Naive thymus-derived CD4-positive, alpha-beta T cell (primary cell): ENCODE measurements at regions of chr10 and their contacts with region 1.

Region 1: GRCh38 chr10:110252151-110252550 is 44.7 kb downstream of the MXI1 start:
- DNase-seq: no peak
- ATAC-seq: no peak
- H3K4me3 ChIP-seq: no peak overlapping the region
- H3K4me3 Mint-ChIP-seq: no peak overlapping the region
- H3K27ac ChIP-seq: no peak overlapping the region
- H3K27ac Mint-ChIP-seq: peak overlapping the region in 1 of 9 donors; percentile 23
- H3K4me1 ChIP-seq: peaks cover 0 to 6% of the 10 kb centered on the region in 2 donors
- H3K4me1 Mint-ChIP-seq: peaks cover 16 to 42% (median 28%) of the 10 kb centered on the region in 7 donors
- H3K27me3 ChIP-seq: no peaks in the 10 kb centered on the region
- H3K27me3 Mint-ChIP-seq: peaks cover 0 to 33% (median 0%) of the 10 kb centered on the region in 5 donors

Region 2: DNA sequence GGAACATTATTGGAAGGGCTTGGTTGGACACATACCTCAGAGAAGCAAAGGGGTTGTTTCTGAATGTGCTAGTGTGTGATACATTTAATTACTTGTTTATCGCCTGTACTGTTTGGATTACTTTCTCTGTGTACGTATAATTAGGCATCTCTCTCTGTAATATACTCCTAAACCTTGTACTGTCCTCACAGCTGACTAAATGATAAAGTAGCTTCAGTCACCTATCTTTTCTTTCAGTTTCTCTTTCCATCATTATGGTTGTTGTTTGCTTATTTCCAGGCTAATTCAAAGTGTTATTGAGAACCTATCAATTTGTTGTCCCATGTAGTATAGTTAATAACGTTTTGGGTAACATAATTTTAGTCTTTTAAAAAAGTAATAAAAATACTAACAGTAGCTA is 10.7 kb before region 1 on chr10:
- CTCF ChIA-PET with region 1: no interaction called
- POLR2A ChIA-PET with region 1: interaction called, 4 read pairs
- intact Hi-C with region 1: loop called in 1 of 2 experiments (anchors 2 kb)
- DNase-seq: no peak
- ATAC-seq: no peak
- H3K4me3 ChIP-seq: no peak overlapping the region
- H3K4me3 Mint-ChIP-seq: peak overlapping the region in 6 of 10 donors; percentile 2 to 46 (median 32)
- H3K27ac ChIP-seq: no peak overlapping the region
- H3K27ac Mint-ChIP-seq: peak overlapping the region in 1 of 9 donors; percentile 0
- H3K4me1 ChIP-seq: peaks cover 3 to 4% of the 10 kb centered on the region in 2 donors
- H3K4me1 Mint-ChIP-seq: peaks cover 18 to 58% (median 43%) of the 10 kb centered on the region in 7 donors
- H3K27me3 ChIP-seq: no peaks in the 10 kb centered on the region
- H3K27me3 Mint-ChIP-seq: peaks cover 0 to 38% (median 0%) of the 10 kb centered on the region in 5 donors

Region 3: DNA sequence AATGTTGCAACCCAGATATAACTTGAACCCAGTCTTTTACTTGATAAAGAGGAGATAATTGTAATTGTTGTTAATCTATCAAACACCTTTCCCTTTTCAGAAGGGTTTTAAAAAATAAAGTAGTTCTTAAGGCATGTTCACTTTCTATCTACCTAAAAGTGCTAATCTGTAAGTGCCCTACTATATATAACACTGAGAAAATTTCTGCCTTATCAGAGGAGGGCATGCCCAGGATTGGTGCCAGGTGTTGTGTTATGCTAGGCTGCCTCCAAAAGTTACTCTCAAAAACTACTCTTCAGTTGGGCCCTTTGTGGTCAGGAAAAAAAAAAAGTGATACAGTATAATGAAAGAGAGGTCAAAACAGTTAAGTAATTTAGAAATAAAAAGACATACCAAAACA is 16.3 kb after region 1 on chr10:
- CTCF ChIA-PET with region 1: no interaction called
- POLR2A ChIA-PET with region 1: interaction called, 3 read pairs
- intact Hi-C with region 1: loop called in 1 of 2 experiments (anchors 2 kb)
- DNase-seq: no peak
- ATAC-seq: no peak
- H3K4me3 ChIP-seq: no peak overlapping the region
- H3K4me3 Mint-ChIP-seq: peak overlapping the region in 8 of 10 donors; percentile 43 to 87 (median 64)
- H3K27ac ChIP-seq: no peak overlapping the region
- H3K27ac Mint-ChIP-seq: peak overlapping the region in 8 of 9 donors; percentile 57 to 91 (median 83)
- H3K4me1 ChIP-seq: peaks cover 0 to 12% of the 10 kb centered on the region in 2 donors
- H3K4me1 Mint-ChIP-seq: peaks cover 19 to 68% (median 47%) of the 10 kb centered on the region in 7 donors
- H3K27me3 ChIP-seq: no peaks in the 10 kb centered on the region
- H3K27me3 Mint-ChIP-seq: peaks cover 0 to 35% (median 0%) of the 10 kb centered on the region in 5 donors

Region 4: GRCh38 chr10:110783509-110784107 is 531.5 kb after region 1 on chr10:
- CTCF ChIA-PET with region 1: no interaction called
- POLR2A ChIA-PET with region 1: no interaction called
- intact Hi-C with region 1: no loop called
- DNase-seq: peak; percentile 36 to 92 (median 88)
- ATAC-seq: peak; percentile 94
- H3K4me3 ChIP-seq: no peak overlapping the region
- H3K4me3 Mint-ChIP-seq: peak overlapping the region; percentile 5 to 69 (median 50)
- H3K27ac ChIP-seq: peak overlapping the region; percentile 70
- H3K27ac Mint-ChIP-seq: peak overlapping the region; percentile 68 to 97 (median 93)
- H3K4me1 ChIP-seq: peaks cover 4 to 21% of the 10 kb centered on the region in 2 donors
- H3K4me1 Mint-ChIP-seq: peaks cover 1 to 72% (median 44%) of the 10 kb centered on the region in 7 donors
- H3K27me3 ChIP-seq: no peaks in the 10 kb centered on the region
- H3K27me3 Mint-ChIP-seq: no peaks in the 10 kb centered on the region